ENCODE measurements at regions of chr1 and their contacts with region 1.

Region 1: GRCh38 chr1:53837924-53838652 is at the start of gene NDC1:
- DNase-seq: peak; percentile 86
- H3K4me3 Mint-ChIP-seq: peak within 1 kb of the TSS; percentile 100
- H3K27ac Mint-ChIP-seq: peak within 1 kb of the TSS; percentile 98
- H3K4me1 Mint-ChIP-seq: peaks cover 26% of the 10 kb centered on the region
- H3K27me3 Mint-ChIP-seq: peaks cover 4% of the 10 kb centered on the region
- total RNA-seq, gene NDC1: 33.2 and 38.2 TPM in 2 replicates

Region 2: GRCh38 chr1:53220171-53220961 is 617.7 kb before region 1 on chr1 and contains the start of gene CZIB:
- intact Hi-C with region 1: loop called (anchors 1 kb)
- DNase-seq: peak; percentile 92
- H3K4me3 Mint-ChIP-seq: peak within 1 kb of the TSS; percentile 90
- H3K27ac Mint-ChIP-seq: peak within 1 kb of the TSS; percentile 97
- H3K4me1 Mint-ChIP-seq: peaks cover 30% of the 10 kb centered on the region
- H3K27me3 Mint-ChIP-seq: peaks cover 2% of the 10 kb centered on the region
- total RNA-seq, gene CZIB: 43.6 and 45.2 TPM in 2 replicates

Region 3: DNA sequence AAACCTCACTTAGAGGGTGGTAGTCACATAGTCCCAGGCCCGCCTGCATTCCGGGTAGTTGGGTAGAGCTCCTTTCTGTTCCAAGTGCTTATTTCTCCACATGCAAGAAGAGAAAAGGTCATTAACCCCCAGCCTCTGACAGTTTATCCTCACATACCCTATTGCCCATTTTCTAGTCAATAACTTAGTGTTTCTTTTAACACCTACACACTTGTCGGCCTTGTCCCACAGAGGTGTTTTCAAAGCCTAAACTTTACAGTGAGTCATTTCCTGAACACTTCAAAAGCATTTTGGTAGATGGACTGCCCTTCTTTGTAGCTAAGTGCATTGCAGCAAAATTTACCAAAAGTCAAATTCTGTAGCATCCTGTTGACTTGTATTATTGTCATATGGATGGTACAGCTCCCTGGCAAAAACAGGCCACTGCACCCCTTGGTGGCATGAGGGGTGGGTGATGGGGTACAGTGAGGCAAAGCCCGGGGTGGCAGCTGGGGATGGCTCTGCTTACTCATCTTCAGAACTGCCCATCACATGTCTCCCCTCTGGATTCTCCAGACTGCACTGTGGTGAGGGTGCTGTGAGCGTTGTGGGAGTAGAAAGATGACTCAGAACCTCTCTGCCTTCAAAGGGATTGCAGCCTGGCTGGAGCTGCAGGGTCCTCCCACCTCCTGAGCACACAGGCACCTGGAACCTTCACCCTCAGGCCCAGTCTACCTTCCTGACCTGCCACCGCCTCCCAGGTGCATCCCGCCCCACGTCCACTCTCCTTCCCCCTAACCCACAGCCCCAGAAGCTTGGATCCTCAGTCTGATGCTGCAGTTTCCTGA is 424.7 kb before region 1 on chr1:
- intact Hi-C with region 1: loop called (anchors 5 kb)
- DNase-seq: peak; percentile 73
- H3K4me3 Mint-ChIP-seq: peak overlapping the region; percentile 68
- H3K27ac Mint-ChIP-seq: peak overlapping the region; percentile 95
- H3K4me1 Mint-ChIP-seq: peaks cover 86% of the 10 kb centered on the region
- H3K27me3 Mint-ChIP-seq: no peaks in the 10 kb centered on the region

Region 4: DNA sequence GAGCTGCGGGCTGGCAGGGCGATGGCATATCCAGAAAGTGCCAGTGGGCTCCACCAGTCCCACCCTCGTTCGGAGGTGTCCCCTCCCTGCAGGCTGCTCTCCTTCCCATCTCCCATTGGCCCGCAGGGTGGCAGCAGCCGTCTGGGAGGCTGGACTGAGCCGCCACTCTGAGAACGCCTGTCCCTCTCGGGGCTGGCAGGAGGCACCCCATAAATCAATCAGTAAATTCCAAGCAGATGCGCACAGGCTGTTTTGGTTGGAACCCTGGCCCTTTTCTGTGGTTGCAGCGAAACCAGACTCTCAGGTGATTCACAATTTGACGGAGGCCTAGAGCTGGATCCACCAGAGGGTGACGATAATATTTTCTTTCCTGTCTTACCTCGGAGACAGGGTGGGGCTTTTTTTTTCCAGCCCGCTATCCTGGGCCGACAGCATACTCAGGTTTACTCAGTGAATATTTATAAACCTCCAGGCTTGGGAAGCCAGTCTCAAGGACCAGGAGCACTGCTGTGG is 198.8 kb before region 1 on chr1:
- intact Hi-C with region 1: no loop called
- DNase-seq: no peak
- H3K4me3 Mint-ChIP-seq: no peak overlapping the region
- H3K27ac Mint-ChIP-seq: no peak overlapping the region
- H3K4me1 Mint-ChIP-seq: no peaks in the 10 kb centered on the region
- H3K27me3 Mint-ChIP-seq: no peaks in the 10 kb centered on the region

Region 5: DNA sequence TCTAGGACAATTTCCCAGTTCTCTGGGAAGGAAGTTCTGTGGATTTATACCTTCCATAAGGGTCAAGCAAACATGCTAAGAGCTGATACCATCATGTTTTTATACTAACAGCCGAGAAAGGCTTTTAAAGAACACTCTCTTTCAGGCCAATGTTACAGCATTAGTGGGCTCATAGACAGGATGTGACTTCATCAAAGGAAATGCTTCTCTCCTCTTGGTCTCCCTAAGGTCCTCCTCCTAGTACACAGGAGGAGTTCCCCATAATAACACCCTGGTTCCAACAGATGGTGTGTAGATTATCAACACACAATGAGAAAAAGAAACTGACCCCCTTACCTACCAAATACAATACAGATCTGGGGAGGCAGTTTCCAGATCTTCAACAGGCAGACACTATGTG is 72.4 kb before region 1 on chr1:
- intact Hi-C with region 1: loop called (anchors 5 kb)
- DNase-seq: no peak
- H3K4me3 Mint-ChIP-seq: peak overlapping the region; percentile 15
- H3K27ac Mint-ChIP-seq: peak overlapping the region; percentile 81
- H3K4me1 Mint-ChIP-seq: peaks cover 34% of the 10 kb centered on the region
- H3K27me3 Mint-ChIP-seq: no peaks in the 10 kb centered on the region

Region 6: GRCh38 chr1:53889304-53890298 is 51.5 kb after region 1 on chr1 and contains the start of gene YIPF1:
- intact Hi-C with region 1: loop called (anchors 1 kb)
- DNase-seq: peak; percentile 89
- H3K4me3 Mint-ChIP-seq: peak within 1 kb of the TSS; percentile 98
- H3K27ac Mint-ChIP-seq: peak within 1 kb of the TSS; percentile 96
- H3K4me1 Mint-ChIP-seq: peaks cover 26% of the 10 kb centered on the region
- H3K27me3 Mint-ChIP-seq: no peaks in the 10 kb centered on the region
- total RNA-seq, gene YIPF1: 14.7 and 15.2 TPM in 2 replicates

Region 7: DNA sequence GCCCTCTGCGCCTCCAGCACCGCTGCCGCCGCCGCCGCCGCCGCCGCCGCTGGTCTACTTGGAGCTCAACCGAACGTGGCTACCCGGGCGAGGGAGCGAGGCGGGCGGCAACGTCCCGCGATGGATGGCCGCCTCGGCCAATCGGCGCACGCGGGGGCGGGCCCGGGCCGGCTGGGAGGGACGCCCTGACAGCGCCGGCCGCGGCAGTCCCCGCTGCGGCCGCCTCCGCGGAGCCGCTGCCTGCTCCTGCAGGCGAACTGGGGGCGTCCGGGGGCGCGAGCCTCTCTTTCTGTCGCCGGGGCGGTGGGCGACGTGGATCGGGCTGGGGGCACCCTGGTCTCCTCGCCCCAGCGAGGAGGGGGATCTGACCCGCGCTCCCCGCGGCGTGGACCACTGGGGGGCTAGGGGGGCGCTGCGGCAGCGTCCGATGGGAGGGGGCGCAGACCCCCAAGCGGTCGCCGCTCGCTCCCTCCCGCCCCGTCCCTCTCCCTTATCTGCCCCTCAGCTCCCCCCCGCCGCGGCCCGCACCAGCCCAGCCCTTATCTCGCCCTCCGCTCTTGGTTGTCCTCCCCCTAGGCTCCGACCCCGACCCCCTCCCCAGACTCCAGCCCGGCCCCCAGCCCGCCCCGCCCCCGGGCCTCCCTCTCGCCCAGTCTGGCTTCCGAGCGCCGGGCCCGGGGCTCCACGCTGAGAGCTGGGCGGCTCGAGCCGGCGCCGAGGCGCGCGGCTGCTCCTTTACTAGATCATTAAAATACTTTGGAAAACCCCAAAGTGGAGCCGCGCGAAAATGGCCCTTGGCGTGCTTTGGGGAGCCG is 568.5 kb after region 1 on chr1 and contains the start of gene SSBP3:
- intact Hi-C with region 1: loop called (anchors 5 kb)
- DNase-seq: peak; percentile 91
- H3K4me3 Mint-ChIP-seq: peak within 1 kb of the TSS; percentile 88
- H3K27ac Mint-ChIP-seq: peak within 1 kb of the TSS; percentile 83
- H3K4me1 Mint-ChIP-seq: peaks cover 72% of the 10 kb centered on the region
- H3K27me3 Mint-ChIP-seq: no peaks in the 10 kb centered on the region
- total RNA-seq, gene SSBP3: 98.0 and 110 TPM in 2 replicates

Measured in activated T-helper 1 cell treated with anti-CD3 and anti-CD28 coated beads, Interleukin-12 subunit alpha, Interleukin-12 subunit beta, Interleukin-2, Interleukin-4 antibody, amounts not matched to agents 30 ng/mL and 10 ng/mL and 1 ng/mL, durations not matched to agents 14 hours and 24 hours and 36 hours (primary cell).